ENCODE measurements at regions of chr1 and their contacts with region 1.

Region 1: GRCh38 chr1:115717541-115717940 is 51.0 kb downstream of the CASQ2 start:
- DNase-seq: peak in 6 of 7 donors; percentile 21 to 71 (median 39)
- H3K4me3 ChIP-seq: no peak overlapping the region
- H3K27ac ChIP-seq: no peak overlapping the region
- H3K4me1 ChIP-seq: no peaks in the 10 kb centered on the region
- H3K27me3 ChIP-seq: no peaks in the 10 kb centered on the region
- CTCF ChIP-seq: peak; percentile 28 to 60 (median 48)
- POLR2A ChIP-seq: no peak

Region 2: DNA sequence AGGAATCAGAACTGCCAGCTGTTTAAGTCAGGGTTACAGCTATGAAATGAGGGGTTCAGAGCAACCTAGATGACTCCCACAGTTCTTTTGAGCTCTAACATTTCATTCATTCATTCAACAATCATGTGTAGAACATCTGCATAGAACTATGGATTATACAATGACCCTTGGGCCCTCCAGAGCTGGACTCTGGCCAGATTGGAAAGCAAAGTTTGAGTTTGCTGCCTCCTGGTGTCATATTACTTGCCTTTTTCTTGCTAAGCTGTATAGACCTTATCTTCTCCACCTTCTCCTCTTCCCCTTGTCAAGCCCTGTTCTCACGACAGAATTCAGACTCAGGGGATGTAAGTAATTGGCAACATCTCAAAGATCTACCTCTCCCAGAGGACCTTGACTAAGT is 47.0 kb after region 1 on chr1:
- intact Hi-C with region 1: loop called in 1 of 2 experiments (anchors 10 kb)
- DNase-seq: peak in 1 of 7 donors; percentile 44
- H3K4me3 ChIP-seq: no peak overlapping the region
- H3K27ac ChIP-seq: no peak overlapping the region
- H3K4me1 ChIP-seq: no peaks in the 10 kb centered on the region
- H3K27me3 ChIP-seq: no peaks in the 10 kb centered on the region
- CTCF ChIP-seq: peak in 4 of 6 experiments; percentile 19 to 44 (median 32)
- POLR2A ChIP-seq: no peak

Region 3: DNA sequence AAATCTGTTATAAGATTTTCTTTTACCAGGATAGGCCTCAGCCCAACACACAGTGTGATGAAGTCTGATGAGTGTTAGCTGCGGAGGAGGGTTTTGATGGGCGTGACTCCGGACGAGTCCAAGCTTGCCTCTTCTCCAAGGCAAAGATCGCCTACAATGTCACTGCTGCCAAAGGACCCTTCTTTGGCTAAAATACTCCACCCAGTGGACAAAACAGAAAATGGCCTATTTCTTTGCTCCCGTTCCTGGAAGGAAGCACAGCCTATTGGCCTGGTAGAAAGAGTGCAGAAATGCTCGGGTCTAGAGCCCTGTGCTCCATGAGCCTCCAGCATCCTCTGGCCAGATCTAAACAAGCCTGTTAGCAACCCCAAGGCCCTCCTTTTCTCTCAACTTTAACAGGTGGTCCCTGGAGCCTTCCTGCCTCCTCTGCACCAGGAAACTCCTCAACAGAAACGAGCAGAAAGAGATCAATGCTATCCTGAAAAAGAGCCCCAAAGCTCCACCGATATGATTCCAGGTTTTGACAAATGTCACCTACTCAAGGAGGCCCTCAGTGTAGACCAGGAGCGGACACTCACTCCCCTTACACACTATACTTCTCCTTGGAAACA is 54.4 kb after region 1 on chr1:
- intact Hi-C with region 1: loop called (anchors 5 to 10 kb)
- DNase-seq: peak; percentile 56 to 82 (median 67)
- H3K4me3 ChIP-seq: no peak overlapping the region
- H3K27ac ChIP-seq: no peak overlapping the region
- H3K4me1 ChIP-seq: peaks cover 0 to 3% of the 10 kb centered on the region in 2 donors
- H3K27me3 ChIP-seq: no peaks in the 10 kb centered on the region
- CTCF ChIP-seq: peak; percentile 55 to 84 (median 77)
- POLR2A ChIP-seq: no peak